ENCODE measurements at regions of chr2 and their contacts with region 1.

Region 1: GRCh38 chr2:113889471-113890252 is at the start of gene ACTR3:
- DNase-seq: peak; percentile 89
- H3K4me3 ChIP-seq: peak within 1 kb of the TSS; percentile 96
- CTCF ChIP-seq: no peak

Region 2: GRCh38 chr2:113720167-113720566 is 169.5 kb before region 1 on chr2:
- CTCF ChIA-PET with region 1: no interaction called
- POLR2A ChIA-PET with region 1: no interaction called
- DNase-seq: no peak
- H3K4me3 ChIP-seq: no peak overlapping the region
- CTCF ChIP-seq: peak; percentile 27

Region 3: GRCh38 chr2:113756355-113757137 is 133.1 kb before region 1 on chr2 and contains the start of gene SLC35F5:
- CTCF ChIA-PET with region 1: interaction called, 3 read pairs
- POLR2A ChIA-PET with region 1: interaction called, 40 read pairs
- DNase-seq: peak; percentile 28
- H3K4me3 ChIP-seq: peak within 1 kb of the TSS; percentile 97
- CTCF ChIP-seq: no peak

Region 4: GRCh38 chr2:113818382-113818951 is 71.2 kb before region 1 on chr2:
- CTCF ChIA-PET with region 1: no interaction called
- POLR2A ChIA-PET with region 1: interaction called, 11 read pairs
- DNase-seq: peak; percentile 99
- H3K4me3 ChIP-seq: peak overlapping the region; percentile 24
- CTCF ChIP-seq: no peak

Measured in AG04449 (cell line).